ENCODE measurements at regions of chr6 and their contacts with region 1.

Region 1: DNA sequence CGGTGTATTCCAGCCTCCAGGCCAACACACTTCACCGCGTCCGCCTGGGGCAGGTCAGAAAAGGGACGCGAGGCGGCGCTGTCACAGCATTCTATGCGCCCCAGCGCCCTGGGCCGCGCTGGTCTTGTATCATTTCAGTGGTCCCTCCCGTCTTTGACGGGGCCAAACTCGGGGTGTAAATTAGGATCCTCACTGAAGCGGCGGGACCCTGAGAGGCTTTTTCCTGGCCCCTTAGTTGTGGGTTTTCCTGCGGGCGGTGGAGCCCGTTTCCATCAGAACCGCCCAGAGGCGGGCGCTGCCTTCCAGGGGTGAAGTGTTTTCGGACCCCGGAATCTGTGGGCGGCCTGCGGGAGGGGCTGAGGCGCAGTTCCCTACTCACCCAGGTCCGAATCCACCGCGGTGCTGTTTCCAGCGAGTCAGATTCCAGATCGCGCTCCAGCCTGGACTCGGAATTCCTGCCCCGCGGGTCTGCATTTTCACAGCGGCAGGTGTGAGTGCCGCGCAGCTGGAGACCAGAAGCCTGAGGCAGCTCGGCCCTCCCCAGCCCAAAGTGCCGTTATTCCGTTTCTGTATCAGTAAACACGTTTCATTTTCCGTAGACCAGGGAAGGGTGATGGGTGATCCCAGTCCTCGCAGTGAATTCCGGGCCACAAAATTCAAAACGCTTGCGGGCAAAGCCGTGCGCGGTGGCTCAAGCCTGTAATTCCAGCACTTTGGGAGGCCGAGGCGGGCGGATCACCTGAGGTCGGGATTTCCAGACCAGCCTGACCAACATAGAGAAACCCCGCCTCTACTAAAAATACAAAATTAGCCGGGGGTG is 3.9 kb upstream of the MICB start:
- DNase-seq: peak; percentile 88
- ATAC-seq: peak; percentile 65
- H3K4me3 ChIP-seq: peak overlapping the region; percentile 77
- H3K27ac ChIP-seq: no peak overlapping the region
- H3K4me1 ChIP-seq: peaks cover 34% of the 10 kb centered on the region
- H3K27me3 ChIP-seq: no peaks in the 10 kb centered on the region
- CTCF ChIP-seq: peak; percentile 86

Region 2: DNA sequence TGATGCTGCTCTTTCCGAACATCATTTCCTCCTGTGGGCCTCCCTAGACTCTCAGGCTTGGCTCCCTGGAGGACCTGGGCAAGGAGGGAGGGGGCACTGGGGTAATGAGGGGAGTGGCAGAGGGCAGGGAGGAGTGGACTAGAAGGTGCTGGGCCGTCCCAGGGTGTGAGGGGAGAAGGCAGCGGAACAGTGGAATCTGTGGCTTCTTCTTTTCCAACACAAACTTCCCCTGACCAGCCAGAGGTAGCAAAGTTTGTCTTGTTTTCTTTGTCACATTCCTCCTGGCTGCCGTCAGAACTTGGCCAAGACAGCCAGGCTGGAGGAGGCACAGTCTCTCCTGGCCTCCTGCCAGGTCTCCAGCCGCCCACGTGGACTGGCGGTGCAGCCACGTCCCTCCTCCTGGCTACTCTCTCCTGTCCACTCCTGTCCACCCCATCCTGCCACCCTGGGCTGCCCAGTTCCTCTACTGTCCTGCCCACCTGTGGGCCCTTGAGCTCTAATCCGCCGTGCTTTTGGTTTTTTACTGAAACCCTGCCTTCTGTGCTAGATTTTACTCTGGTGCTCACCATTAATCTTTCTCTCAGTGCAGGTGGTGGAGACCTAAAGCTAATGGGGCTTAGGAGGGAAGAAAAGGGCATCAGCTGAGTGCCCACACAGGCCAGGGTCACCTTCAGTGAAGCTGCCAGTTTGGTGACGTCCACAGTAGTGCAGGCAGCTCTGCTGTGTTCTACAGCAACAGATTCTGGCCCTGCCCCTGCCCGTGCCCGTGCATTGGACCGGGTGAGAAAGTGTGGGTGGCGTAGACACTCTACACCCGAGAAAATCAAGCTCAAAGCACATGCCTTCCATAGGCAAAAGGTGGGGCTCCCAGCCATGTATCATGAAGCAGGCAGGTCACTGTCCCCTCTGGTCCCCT is 371.0 kb before region 1 on chr6:
- CTCF ChIA-PET with region 1: no interaction called
- POLR2A ChIA-PET with region 1: no interaction called
- intact Hi-C with region 1: no loop called
- DNase-seq: no peak
- ATAC-seq: no peak
- H3K4me3 ChIP-seq: no peak overlapping the region
- H3K27ac ChIP-seq: no peak overlapping the region
- H3K4me1 ChIP-seq: peaks cover 23% of the 10 kb centered on the region
- H3K27me3 ChIP-seq: no peaks in the 10 kb centered on the region
- CTCF ChIP-seq: no peak

Region 3: GRCh38 chr6:31403283-31403989 is 90.6 kb before region 1 on chr6 and contains the start of gene MICA:
- CTCF ChIA-PET with region 1: no interaction called
- POLR2A ChIA-PET with region 1: interaction called, 5 read pairs
- intact Hi-C with region 1: loop called (anchors 5 kb)
- DNase-seq: peak; percentile 94
- ATAC-seq: peak; percentile 65
- H3K4me3 ChIP-seq: peak within 1 kb of the TSS; percentile 97
- H3K27ac ChIP-seq: peak within 1 kb of the TSS; percentile 40
- H3K4me1 ChIP-seq: peaks cover 49% of the 10 kb centered on the region
- H3K27me3 ChIP-seq: no peaks in the 10 kb centered on the region
- CTCF ChIP-seq: no peak
- total RNA-seq, gene MICA: 33.1 and 35.0 TPM in 2 replicates

Region 4: GRCh38 chr6:31426395-31427354 is 67.4 kb before region 1 on chr6:
- CTCF ChIA-PET with region 1: no interaction called
- POLR2A ChIA-PET with region 1: no interaction called
- intact Hi-C with region 1: no loop called
- DNase-seq: no peak
- ATAC-seq: no peak
- H3K4me3 ChIP-seq: no peak overlapping the region
- H3K27ac ChIP-seq: no peak overlapping the region
- H3K4me1 ChIP-seq: no peaks in the 10 kb centered on the region
- H3K27me3 ChIP-seq: no peaks in the 10 kb centered on the region
- CTCF ChIP-seq: no peak

Region 5: GRCh38 chr6:31525932-31526591 is 32.0 kb after region 1 on chr6:
- CTCF ChIA-PET with region 1: no interaction called
- POLR2A ChIA-PET with region 1: interaction called, 5 read pairs
- intact Hi-C with region 1: loop called (anchors 2 kb)
- DNase-seq: peak; percentile 45
- ATAC-seq: peak; percentile 56
- H3K4me3 ChIP-seq: no peak overlapping the region
- H3K27ac ChIP-seq: peak overlapping the region; percentile 8; the same call in 1 of the 2 replicates
- H3K4me1 ChIP-seq: peaks cover 8% of the 10 kb centered on the region
- H3K27me3 ChIP-seq: no peaks in the 10 kb centered on the region
- CTCF ChIP-seq: no peak

Region 6: DNA sequence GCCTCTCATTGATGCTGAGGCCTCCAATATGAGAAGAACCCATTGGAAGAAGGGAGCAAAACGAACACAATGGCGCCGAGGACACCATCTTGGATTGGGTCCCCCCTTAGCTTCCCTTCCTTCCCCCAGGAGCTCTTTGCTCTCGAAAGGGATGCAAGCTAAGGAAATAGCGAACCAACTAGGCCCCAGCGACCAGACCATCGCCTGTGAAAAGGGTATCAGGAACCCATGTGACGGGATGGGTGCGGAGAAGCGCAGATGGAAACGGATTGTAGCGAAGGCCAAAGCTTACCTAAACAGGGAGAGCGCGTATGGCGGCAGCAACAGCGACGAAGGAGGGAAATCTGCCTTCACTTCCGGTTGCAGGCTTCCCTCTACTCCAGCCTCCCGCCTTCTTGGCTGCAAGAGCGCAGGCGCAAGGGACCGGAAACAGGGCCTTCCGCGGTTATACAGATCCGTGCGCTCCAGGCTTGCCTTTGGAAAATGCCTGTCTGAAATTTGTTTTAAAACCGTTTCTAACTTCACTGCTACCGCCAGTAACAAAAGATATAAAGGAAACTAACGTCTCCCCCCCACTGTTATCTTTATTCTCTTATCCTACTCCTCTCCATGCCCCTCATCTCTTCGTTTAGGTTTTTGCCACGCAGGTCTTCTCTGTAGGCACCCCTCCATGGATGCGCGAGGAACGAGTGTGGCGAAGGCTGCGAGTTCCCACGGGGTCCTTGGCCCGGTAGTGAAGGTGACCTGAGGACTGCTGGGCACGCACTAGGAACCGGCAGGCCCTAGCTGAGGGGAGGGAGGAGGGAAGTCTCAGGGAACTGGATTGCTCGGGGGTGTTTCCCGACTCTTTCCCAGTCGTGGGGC is 47.8 kb after region 1 on chr6 and contains the start of gene DDX39B:
- CTCF ChIA-PET with region 1: interaction called, 6 read pairs
- POLR2A ChIA-PET with region 1: interaction called, 4 read pairs
- intact Hi-C with region 1: loop called (anchors 1 kb)
- DNase-seq: peak; percentile 97
- ATAC-seq: peak; percentile 77
- H3K4me3 ChIP-seq: peak within 1 kb of the TSS; percentile 92
- H3K27ac ChIP-seq: peak within 1 kb of the TSS; percentile 90
- H3K4me1 ChIP-seq: peaks cover 26% of the 10 kb centered on the region
- H3K27me3 ChIP-seq: no peaks in the 10 kb centered on the region
- CTCF ChIP-seq: no peak
- total RNA-seq, gene DDX39B: 410 and 465 TPM in 2 replicates

Region 7: GRCh38 chr6:31546962-31547726 is 53.1 kb after region 1 on chr6 and contains the start of gene NFKBIL1:
- CTCF ChIA-PET with region 1: no interaction called
- POLR2A ChIA-PET with region 1: interaction called, 4 read pairs
- intact Hi-C with region 1: loop called (anchors 1 kb)
- DNase-seq: peak; percentile 95
- ATAC-seq: peak; percentile 81
- H3K4me3 ChIP-seq: peak within 1 kb of the TSS; percentile 76
- H3K27ac ChIP-seq: peak within 1 kb of the TSS; percentile 41
- H3K4me1 ChIP-seq: peaks cover 20% of the 10 kb centered on the region
- H3K27me3 ChIP-seq: no peaks in the 10 kb centered on the region
- CTCF ChIP-seq: no peak
- total RNA-seq, gene NFKBIL1: 38.2 and 46.9 TPM in 2 replicates

Region 8: DNA sequence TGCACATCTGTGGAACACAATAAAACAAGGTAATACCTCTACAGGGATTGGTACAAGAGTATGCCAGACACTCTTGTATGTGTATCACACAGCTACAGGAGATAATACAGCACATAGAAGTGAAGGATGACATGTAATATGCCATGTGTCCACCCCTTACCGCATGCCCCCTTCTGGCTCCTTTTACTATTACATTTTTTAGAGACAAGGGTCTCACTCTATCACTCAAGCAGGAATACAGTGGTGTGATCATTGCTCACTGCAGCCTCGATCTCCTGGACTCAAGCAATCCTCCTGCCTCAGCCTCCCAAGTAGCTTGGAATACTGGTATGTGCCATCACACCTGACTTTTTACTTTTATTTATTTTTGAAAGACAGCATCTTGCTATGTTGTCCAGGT is 102.9 kb after region 1 on chr6:
- CTCF ChIA-PET with region 1: interaction called, 3 read pairs
- POLR2A ChIA-PET with region 1: no interaction called
- intact Hi-C with region 1: loop called (anchors 1 kb)
- DNase-seq: peak; percentile 58
- ATAC-seq: peak; percentile 76
- H3K4me3 ChIP-seq: no peak overlapping the region
- H3K27ac ChIP-seq: no peak overlapping the region
- H3K4me1 ChIP-seq: no peaks in the 10 kb centered on the region
- H3K27me3 ChIP-seq: no peaks in the 10 kb centered on the region
- CTCF ChIP-seq: peak; percentile 61

Measured in PC-3 (cell line).